Dorsolateral prefrontal cortex (tissue), 120 donors: ENCODE measurements at regions of chr2 and their contacts with region 1.

Region 1: DNA sequence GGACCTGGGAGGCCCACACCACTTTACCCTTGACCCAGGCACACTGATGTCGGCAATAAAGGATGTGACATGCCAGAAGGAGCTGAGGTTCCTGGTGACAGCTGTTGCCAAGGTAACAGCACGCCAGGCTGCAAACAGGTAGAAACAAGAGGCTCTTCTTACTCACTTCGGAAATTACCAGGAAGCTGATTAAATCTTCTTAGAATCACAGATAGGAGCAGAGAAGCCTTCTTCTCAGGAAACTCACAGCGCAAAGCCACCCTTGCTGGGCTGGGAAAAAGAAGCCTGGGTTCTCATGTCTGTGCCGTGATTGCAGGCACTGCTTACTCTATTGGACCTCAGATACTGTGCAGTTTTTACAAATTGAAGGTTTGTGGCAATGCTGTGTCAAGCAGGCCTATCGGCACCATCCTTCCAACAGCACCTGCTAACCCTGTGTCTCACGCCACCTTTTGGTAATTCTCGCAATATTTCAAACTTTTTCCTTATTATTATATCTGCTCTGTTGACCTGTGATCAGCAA is 61.0 kb upstream of the TAF1B start:
- DNase-seq: no peak
- H3K4me3 ChIP-seq: no peak overlapping the region
- H3K27ac ChIP-seq: no peak overlapping the region
- H3K27me3 ChIP-seq: no peaks in the 10 kb centered on the region
- CTCF ChIP-seq: no peak

Region 2: DNA sequence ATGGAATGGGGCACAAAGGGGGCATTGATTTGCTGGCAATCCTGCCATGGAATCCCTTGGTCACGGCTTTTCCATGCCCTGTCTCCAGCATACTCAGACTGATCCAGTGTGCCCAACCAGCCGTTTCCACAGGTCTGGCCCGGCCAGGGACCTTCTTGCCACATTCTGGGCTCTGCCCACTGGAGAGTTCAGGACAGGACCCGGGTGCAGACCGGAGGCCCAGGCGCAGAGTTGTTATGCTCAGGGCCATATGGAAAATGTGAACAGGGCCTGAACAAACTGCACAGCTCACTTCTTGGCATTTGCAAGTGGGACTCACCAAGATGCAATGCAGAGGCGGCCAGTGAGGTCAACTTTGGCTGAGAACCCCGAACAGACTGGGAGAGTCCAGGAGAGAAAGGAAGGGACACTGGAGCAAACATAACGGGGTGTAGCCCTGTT is 591.2 kb before region 1 on chr2:
- intact Hi-C with region 1: no loop called
- DNase-seq: peak; percentile 12 to 74 (median 51)
- H3K4me3 ChIP-seq: peak overlapping the region in 1 of 59 donors; percentile 28
- H3K27ac ChIP-seq: peak overlapping the region in 49 of 59 donors; percentile 2 to 77 (median 58)
- H3K27me3 ChIP-seq: no peaks in the 10 kb centered on the region
- CTCF ChIP-seq: peak in 1 of 56 donors; percentile 21

Region 3: GRCh38 chr2:9824956-9825720 is 42.9 kb after region 1 on chr2:
- intact Hi-C with region 1: loop called in 1 of 2 experiments (anchors 1 kb)
- DNase-seq: no peak
- H3K4me3 ChIP-seq: no peak overlapping the region
- H3K27ac ChIP-seq: no peak overlapping the region
- H3K27me3 ChIP-seq: peaks cover 0 to 3% (median 0%) of the 10 kb centered on the region in 45 donors
- CTCF ChIP-seq: no peak